Activated B cell treated with CpG ODN at 0.5 μM for 24 hours (primary cell): ENCODE measurements at regions of chr20 and their contacts with region 1.

Region 1: GRCh38 chr20:54680872-54681619 is 205.7 kb downstream of the DOK5 start:
- DNase-seq: no peak
- ATAC-seq: no peak
- H3K4me3 Mint-ChIP-seq: no peak overlapping the region
- H3K27ac Mint-ChIP-seq: no peak overlapping the region
- H3K4me1 Mint-ChIP-seq: no peaks in the 10 kb centered on the region
- H3K27me3 Mint-ChIP-seq: peaks cover 5% of the 10 kb centered on the region
- CTCF ChIP-seq: no peak

Region 2: GRCh38 chr20:56343861-56344381 is 1662.9 kb after region 1 on chr20:
- CTCF ChIA-PET with region 1: no interaction called
- POLR2A ChIA-PET with region 1: no interaction called
- intact Hi-C with region 1: loop called (anchors 5 kb)
- DNase-seq: no peak
- ATAC-seq: no peak
- H3K4me3 Mint-ChIP-seq: no peak overlapping the region
- H3K27ac Mint-ChIP-seq: no peak overlapping the region
- H3K4me1 Mint-ChIP-seq: no peaks in the 10 kb centered on the region
- H3K27me3 Mint-ChIP-seq: peaks cover 64% of the 10 kb centered on the region
- CTCF ChIP-seq: no peak